Sigmoid colon (tissue), 7 donors: ENCODE measurements at regions of chr18 and their contacts with region 1.

Region 1: GRCh38 chr18:13530879-13531387 is 195.4 kb downstream of the FAM210A start:
- DNase-seq: peak; percentile 88
- H3K4me3 ChIP-seq: no peak overlapping the region
- H3K27ac ChIP-seq: peak overlapping the region in 2 of 4 donors; percentile 21 to 63
- H3K4me1 ChIP-seq: peaks cover 0 to 32% (median 19%) of the 10 kb centered on the region in 4 donors
- H3K27me3 ChIP-seq: no peaks in the 10 kb centered on the region
- CTCF ChIP-seq: peak; percentile 25 to 59 (median 38)
- EP300 ChIP-seq: no peak
- POLR2A ChIP-seq: no peak

Region 2: DNA sequence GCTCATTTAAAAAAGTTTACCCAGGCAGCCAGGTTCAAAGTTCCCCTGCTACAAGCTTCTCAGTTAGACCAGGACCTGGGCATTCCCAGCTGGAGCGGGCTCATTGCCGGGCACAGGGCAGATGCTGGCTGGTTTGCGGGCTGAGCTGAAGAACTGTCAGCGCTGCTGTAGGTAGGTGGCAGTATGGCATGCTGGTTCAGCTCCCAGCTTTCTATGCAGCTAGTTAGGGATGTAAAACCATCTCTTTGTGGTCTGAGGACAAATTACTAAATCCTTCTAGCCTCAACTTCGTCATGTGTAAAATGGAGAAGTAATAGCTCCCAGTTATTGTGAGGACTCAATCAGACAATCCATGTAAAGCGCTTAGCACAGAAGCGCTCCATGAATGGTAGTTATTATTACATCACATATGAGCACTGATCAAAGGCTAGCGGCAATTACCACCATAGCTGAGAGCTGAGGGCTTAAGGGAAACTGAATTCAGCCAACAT is 314.8 kb before region 1 on chr18:
- intact Hi-C with region 1: loop called (anchors 1 kb)
- DNase-seq: peak; percentile 90
- H3K4me3 ChIP-seq: no peak overlapping the region
- H3K27ac ChIP-seq: peak overlapping the region in 3 of 4 donors; percentile 51 to 94 (median 88)
- H3K4me1 ChIP-seq: peaks cover 0 to 37% (median 37%) of the 10 kb centered on the region in 4 donors
- H3K27me3 ChIP-seq: no peaks in the 10 kb centered on the region
- CTCF ChIP-seq: peak; percentile 70 to 79 (median 78)
- EP300 ChIP-seq: no peak
- POLR2A ChIP-seq: no peak

Region 3: GRCh38 chr18:13381944-13382365 is 149.0 kb before region 1 on chr18:
- intact Hi-C with region 1: loop called (anchors 5 kb)
- DNase-seq: peak; percentile 88
- H3K4me3 ChIP-seq: peak overlapping the region in 3 of 4 donors; percentile 27 to 41 (median 33)
- H3K27ac ChIP-seq: peak overlapping the region; percentile 66 to 86 (median 82)
- H3K4me1 ChIP-seq: peaks cover 0 to 58% (median 32%) of the 10 kb centered on the region in 4 donors
- H3K27me3 ChIP-seq: no peaks in the 10 kb centered on the region
- CTCF ChIP-seq: no peak
- EP300 ChIP-seq: peak in 1 of 4 donors; percentile 30
- POLR2A ChIP-seq: no peak